Calu3 (cell line): ENCODE measurements at regions of chr1 and their contacts with region 1.

Region 1: DNA sequence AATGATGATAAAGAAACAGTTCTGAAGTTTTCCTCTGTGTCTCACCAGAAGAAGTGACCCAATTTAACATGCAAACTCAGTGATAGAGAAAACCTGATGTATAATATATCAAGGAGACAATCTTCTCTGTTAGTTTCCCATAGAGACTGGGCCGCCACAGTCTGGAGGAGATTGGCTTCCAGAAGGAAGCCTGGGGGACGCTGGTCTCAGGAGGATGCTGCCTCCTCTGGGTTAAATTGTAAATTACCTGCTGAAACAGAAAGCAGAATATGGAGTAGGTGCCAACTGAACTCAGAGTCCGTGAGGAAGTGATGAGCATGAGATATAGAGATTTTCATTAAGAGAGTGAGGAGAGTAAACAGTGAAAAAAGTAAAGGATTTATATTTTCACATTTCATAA is 15.8 kb downstream of the OR14I1 start:
- DNase-seq: peak; percentile 22
- H3K4me3 Mint-ChIP-seq: no peak overlapping the region
- H3K27ac Mint-ChIP-seq: no peak overlapping the region
- H3K4me1 Mint-ChIP-seq: no peaks in the 10 kb centered on the region
- H3K27me3 Mint-ChIP-seq: no peaks in the 10 kb centered on the region
- CTCF ChIP-seq: no peak

Region 2: DNA sequence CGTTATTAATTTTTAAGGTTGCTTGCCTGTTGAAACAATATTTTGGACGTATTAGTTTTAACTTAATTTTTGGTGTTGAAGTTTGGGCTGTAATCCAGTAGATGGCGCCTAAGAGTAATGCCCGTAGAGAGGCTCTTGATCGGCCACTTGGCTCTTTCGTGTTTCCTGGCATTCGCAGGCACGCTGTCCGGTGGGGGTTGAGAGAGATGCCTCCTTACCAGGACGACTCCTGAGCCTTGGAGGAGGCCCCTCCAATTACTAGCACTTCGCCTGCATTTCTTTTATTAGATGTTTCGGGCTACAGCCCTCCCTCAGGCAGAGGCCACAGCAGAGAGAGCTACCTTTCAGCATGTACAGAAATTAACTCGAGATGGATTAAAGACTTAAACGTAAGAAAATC is 443.6 kb before region 1 on chr1:
- CTCF ChIA-PET with region 1: no interaction called
- intact Hi-C with region 1: loop called (anchors 5 kb)
- DNase-seq: peak; percentile 33
- H3K4me3 Mint-ChIP-seq: peak overlapping the region; percentile 26
- H3K27ac Mint-ChIP-seq: no peak overlapping the region
- H3K4me1 Mint-ChIP-seq: no peaks in the 10 kb centered on the region
- H3K27me3 Mint-ChIP-seq: no peaks in the 10 kb centered on the region
- CTCF ChIP-seq: peak; percentile 62

Region 3: DNA sequence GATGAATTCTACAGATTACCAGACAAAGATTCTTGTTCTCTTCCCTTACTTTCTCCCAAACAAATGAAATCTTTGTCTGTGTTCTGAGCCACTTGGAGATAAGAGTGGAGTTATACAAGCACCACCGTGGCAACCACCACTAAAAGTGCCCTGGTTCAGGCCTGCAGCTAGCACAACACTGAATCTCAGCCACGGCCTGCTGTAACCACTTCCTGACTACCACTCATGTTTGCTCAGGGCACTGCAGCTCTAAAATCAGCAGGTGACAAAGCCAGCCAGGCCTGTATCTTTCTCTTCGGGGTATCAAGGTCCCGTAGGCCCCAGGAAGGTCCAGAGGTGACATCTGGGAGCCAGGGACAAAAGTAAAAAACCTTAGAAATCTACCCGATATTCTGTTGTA is 314.4 kb before region 1 on chr1:
- CTCF ChIA-PET with region 1: no interaction called
- intact Hi-C with region 1: no loop called
- DNase-seq: no peak
- H3K4me3 Mint-ChIP-seq: no peak overlapping the region
- H3K27ac Mint-ChIP-seq: no peak overlapping the region
- H3K4me1 Mint-ChIP-seq: no peaks in the 10 kb centered on the region
- H3K27me3 Mint-ChIP-seq: no peaks in the 10 kb centered on the region
- CTCF ChIP-seq: no peak

Region 4: DNA sequence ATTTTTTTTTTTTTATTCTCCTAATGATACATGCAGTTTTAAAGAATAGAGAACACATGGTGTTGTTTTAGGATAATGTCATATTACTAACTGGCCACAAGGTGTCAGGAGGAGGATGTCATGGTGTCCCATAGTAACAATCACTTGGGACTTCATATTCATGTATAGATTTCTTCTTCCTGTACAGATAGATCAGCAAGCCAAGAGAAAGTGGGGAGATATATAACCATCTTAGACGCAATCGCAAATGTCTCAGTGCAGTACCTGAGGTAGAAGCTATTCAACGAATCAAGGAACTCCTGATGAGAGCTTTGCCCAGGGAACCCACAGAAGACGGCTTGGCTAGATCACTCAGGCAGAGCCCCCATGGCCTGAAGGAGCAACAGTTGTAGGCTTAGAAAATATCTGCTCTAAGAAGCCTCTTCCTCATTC is 64.2 kb before region 1 on chr1:
- CTCF ChIA-PET with region 1: no interaction called
- intact Hi-C with region 1: loop called (anchors 1 kb)
- DNase-seq: peak; percentile 21
- H3K4me3 Mint-ChIP-seq: no peak overlapping the region
- H3K27ac Mint-ChIP-seq: no peak overlapping the region
- H3K4me1 Mint-ChIP-seq: no peaks in the 10 kb centered on the region
- H3K27me3 Mint-ChIP-seq: no peaks in the 10 kb centered on the region
- CTCF ChIP-seq: no peak

Region 5: GRCh38 chr1:248670003-248670402 is 16.8 kb before region 1 on chr1:
- CTCF ChIA-PET with region 1: no interaction called
- intact Hi-C with region 1: no loop called
- DNase-seq: no peak
- H3K4me3 Mint-ChIP-seq: no peak overlapping the region
- H3K27ac Mint-ChIP-seq: no peak overlapping the region
- H3K4me1 Mint-ChIP-seq: no peaks in the 10 kb centered on the region
- H3K27me3 Mint-ChIP-seq: no peaks in the 10 kb centered on the region
- CTCF ChIP-seq: no peak